Mammary epithelial cell (primary cell): ENCODE measurements at regions of chr15 and their contacts with region 1.

Region 1: DNA sequence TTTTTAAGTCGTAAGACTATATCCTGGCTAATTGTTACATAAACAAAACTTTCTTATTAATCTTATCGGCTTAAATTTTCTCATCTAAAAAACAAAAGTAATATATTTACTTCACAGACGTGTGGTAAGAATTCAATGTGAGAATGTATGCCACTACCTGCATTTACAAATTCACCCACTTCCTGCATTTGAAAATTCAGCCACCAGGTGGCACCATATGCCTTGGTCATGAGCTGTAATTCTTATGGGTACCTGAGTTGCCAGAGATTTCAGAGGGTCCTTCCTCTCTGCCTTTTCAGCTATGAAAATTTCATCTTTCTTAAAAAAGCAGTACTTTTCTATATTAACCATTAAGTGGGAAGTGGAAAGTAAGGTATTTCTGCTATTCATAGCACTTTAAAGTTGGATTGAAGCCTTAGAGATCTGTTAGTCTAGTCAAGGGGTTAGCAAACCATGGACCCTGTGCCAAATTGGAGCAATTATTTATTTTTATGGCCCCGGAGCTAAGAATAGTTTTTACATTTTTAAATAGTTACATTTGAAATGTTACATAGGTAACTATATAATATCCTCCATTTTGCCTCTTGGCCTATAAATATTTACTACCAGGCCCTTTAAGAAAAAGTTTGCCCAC is 127.8 kb downstream of the HCN4 start:
- DNase-seq: peak; percentile 44
- H3K4me3 ChIP-seq: no peak overlapping the region
- H3K27ac ChIP-seq: no peak overlapping the region
- H3K4me1 ChIP-seq: no peaks in the 10 kb centered on the region
- H3K27me3 ChIP-seq: no peaks in the 10 kb centered on the region
- CTCF ChIP-seq: peak; percentile 83 to 92

Region 2: DNA sequence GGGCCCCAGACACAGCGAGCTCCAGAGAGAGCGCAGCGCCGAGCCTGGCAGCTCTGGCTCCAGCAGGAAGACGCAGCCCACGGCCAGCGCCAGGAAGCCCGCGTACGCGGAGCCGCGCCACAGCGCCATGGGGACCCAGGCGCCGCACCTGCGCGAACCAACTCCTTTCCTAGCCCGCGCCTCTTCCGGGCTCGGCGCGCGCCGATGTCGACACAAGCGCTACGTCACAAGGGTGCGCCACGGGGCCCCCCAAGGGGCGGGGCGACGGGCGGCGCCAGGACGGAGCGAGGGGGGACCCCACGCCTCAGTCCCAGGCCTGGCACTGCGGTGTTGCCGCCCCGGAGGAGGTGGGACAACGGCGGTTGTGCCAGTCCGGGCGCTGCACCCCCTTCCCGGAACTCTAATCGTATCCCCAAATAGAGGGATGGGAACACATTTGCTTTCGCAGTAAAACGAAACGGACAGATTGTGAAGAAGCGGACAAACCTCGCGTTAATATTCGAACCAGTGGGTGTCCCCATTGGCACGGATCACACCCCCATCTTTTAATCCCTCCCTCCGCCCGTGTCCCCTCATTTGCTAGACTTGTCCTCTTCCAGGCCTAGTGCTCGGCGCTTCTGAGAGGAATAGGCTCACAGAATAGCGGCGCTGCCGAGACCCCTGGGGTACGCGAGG is 457.3 kb before region 1 on chr15 and contains the start of gene ADPGK:
- CTCF ChIA-PET with region 1: no interaction called
- dilution Hi-C with region 1: no loop called
- in situ Hi-C with region 1: loop called in 1 of 2 experiments (anchors 10 kb)
- intact Hi-C with region 1: loop called (anchors 10 kb)
- DNase-seq: peak; percentile 95
- H3K4me3 ChIP-seq: peak within 1 kb of the TSS; percentile 94 to 97 (median 95)
- H3K27ac ChIP-seq: peak within 1 kb of the TSS; percentile 82
- H3K4me1 ChIP-seq: peaks cover 16% of the 10 kb centered on the region
- H3K27me3 ChIP-seq: no peaks in the 10 kb centered on the region
- CTCF ChIP-seq: no peak
- total RNA-seq, gene ADPGK: 39.7 to 46.9 TPM

Region 3: GRCh38 chr15:73165844-73166243 is 75.1 kb before region 1 on chr15:
- CTCF ChIA-PET with region 1: interaction called, 10 read pairs
- dilution Hi-C with region 1: no loop called
- in situ Hi-C with region 1: no loop called
- intact Hi-C with region 1: no loop called
- DNase-seq: peak; percentile 72
- H3K4me3 ChIP-seq: no peak overlapping the region
- H3K27ac ChIP-seq: peak overlapping the region; percentile 6
- H3K4me1 ChIP-seq: peaks cover 8% of the 10 kb centered on the region
- H3K27me3 ChIP-seq: no peaks in the 10 kb centered on the region
- CTCF ChIP-seq: no peak

Region 4: GRCh38 chr15:73273181-73274002 is 32.4 kb after region 1 on chr15:
- CTCF ChIA-PET with region 1: no interaction called
- dilution Hi-C with region 1: no loop called
- in situ Hi-C with region 1: no loop called
- intact Hi-C with region 1: loop called (anchors 1 kb)
- DNase-seq: peak; percentile 47
- H3K4me3 ChIP-seq: no peak overlapping the region
- H3K27ac ChIP-seq: no peak overlapping the region
- H3K4me1 ChIP-seq: no peaks in the 10 kb centered on the region
- H3K27me3 ChIP-seq: no peaks in the 10 kb centered on the region
- CTCF ChIP-seq: peak; percentile 74 to 77

Region 5: DNA sequence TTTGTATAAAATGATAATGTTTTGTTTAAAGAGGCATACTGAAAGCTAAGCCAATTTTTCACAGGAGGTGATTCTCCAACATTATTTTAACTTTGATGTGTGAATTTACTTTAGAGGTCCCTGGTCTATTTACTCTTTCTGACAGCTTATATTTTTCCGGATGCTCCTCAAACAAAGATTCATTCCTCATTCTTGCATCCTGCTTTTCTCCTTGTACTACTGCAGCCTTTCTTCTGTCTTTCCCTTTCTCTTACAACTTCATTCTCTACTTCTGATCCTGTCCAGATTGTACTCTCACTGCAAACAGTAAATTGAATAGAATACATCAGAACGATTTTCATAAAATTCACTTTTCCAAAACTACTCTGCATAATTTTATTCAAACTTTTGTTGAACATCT is 387.1 kb after region 1 on chr15:
- CTCF ChIA-PET with region 1: interaction called, 10 read pairs
- dilution Hi-C with region 1: no loop called
- in situ Hi-C with region 1: no loop called
- intact Hi-C with region 1: no loop called
- DNase-seq: no peak
- H3K4me3 ChIP-seq: no peak overlapping the region
- H3K27ac ChIP-seq: no peak overlapping the region
- H3K4me1 ChIP-seq: peaks cover 33% of the 10 kb centered on the region
- H3K27me3 ChIP-seq: no peaks in the 10 kb centered on the region
- CTCF ChIP-seq: no peak